K562 (cell line): ENCODE measurements at regions of chr15 and their contacts with region 1.

Region 1: DNA sequence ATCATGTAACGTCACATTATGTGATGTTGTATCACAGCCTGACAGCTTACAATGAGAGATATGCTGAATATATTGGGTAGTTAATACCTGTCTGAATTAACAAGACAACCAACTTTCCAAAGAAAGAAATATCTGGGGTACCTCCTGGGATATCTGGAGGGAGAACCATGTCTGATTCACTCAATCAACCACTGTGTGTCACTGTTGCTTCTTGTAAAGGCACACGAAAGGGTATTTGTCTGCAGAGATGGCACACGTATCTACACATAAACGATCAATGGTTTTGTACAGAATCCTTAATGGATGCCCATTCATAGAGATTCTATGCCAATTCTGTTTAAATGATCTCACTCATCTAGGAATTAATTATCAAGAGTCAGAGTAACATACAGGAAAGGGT is 252.1 kb upstream of the TMCO5A start:
- DNase-seq: peak in 1 of 4 experiments; percentile 3
- ATAC-seq: no peak
- H3K4me3 ChIP-seq: no peak overlapping the region
- H3K27ac ChIP-seq: no peak overlapping the region
- H3K4me1 ChIP-seq: no peaks in the 10 kb centered on the region
- H3K27me3 ChIP-seq: no peaks in the 10 kb centered on the region
- CTCF ChIP-seq: no peak
- EP300 ChIP-seq: no peak
- POLR2A ChIP-seq: no peak
- RAD21 ChIP-seq: no peak

Region 2: GRCh38 chr15:37709669-37710068 is 27.4 kb after region 1 on chr15:
- CTCF ChIA-PET with region 1: no interaction called
- POLR2A ChIA-PET with region 1: no interaction called
- in situ Hi-C with region 1: no loop called
- intact Hi-C with region 1: no loop called
- DNase-seq: no peak
- ATAC-seq: no peak
- H3K4me3 ChIP-seq: no peak overlapping the region
- H3K27ac ChIP-seq: no peak overlapping the region
- H3K4me1 ChIP-seq: no peaks in the 10 kb centered on the region
- H3K27me3 ChIP-seq: no peaks in the 10 kb centered on the region
- CTCF ChIP-seq: no peak
- EP300 ChIP-seq: no peak
- POLR2A ChIP-seq: no peak
- RAD21 ChIP-seq: no peak

Region 3: DNA sequence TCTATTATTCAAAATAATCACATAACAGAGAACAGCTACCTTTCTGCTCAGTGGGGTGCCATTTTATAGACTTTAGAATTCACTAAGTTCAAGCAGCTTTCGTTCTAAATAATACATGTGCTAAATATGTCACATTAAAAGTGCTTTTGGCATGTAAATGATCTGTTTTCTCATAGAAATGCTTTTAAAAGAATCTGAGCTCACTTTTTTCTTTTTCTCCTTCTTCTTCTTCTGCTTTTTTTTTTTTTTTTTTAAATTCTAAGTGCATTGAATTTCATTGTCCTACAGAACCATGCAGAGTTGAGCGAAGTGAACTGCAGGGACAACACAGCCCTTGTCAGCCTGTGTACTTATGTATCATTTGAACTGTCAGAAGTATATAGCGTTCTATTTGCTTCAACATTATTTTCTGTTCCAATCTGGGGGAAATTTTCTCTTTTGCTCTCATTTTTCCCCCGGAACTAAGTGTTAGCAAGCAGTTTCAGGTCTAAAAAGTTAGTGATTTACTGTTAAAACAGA is 58.4 kb after region 1 on chr15:
- CTCF ChIA-PET with region 1: no interaction called
- POLR2A ChIA-PET with region 1: interaction called, 5 read pairs
- in situ Hi-C with region 1: no loop called
- intact Hi-C with region 1: loop called (anchors 10 kb)
- DNase-seq: no peak
- ATAC-seq: no peak
- H3K4me3 ChIP-seq: no peak overlapping the region
- H3K27ac ChIP-seq: no peak overlapping the region
- H3K4me1 ChIP-seq: no peaks in the 10 kb centered on the region
- H3K27me3 ChIP-seq: no peaks in the 10 kb centered on the region
- CTCF ChIP-seq: no peak
- EP300 ChIP-seq: no peak
- POLR2A ChIP-seq: no peak
- RAD21 ChIP-seq: no peak